ENCODE measurements at regions of chr1 and their contacts with region 1.

Region 1: GRCh38 chr1:245045087-245045881 is 109.5 kb upstream of the KIF26B start:
- DNase-seq: no peak
- H3K4me3 ChIP-seq: no peak overlapping the region
- H3K27ac ChIP-seq: no peak overlapping the region
- H3K4me1 ChIP-seq: peaks cover 0 to 9% of the 10 kb centered on the region in 2 experiments; a peak in 1 of 4 replicates
- H3K27me3 ChIP-seq: no peaks in the 10 kb centered on the region
- CTCF ChIP-seq: no peak
- EP300 ChIP-seq: no peak
- RAD21 ChIP-seq: no peak

Region 2: GRCh38 chr1:244603498-244603897 is 441.8 kb before region 1 on chr1:
- CTCF ChIA-PET with region 1: interaction called, 29 read pairs
- POLR2A ChIA-PET with region 1: no interaction called
- DNase-seq: peak; percentile 43
- H3K4me3 ChIP-seq: no peak overlapping the region
- H3K27ac ChIP-seq: no peak overlapping the region
- H3K4me1 ChIP-seq: peaks cover 0 to 4% of the 10 kb centered on the region in 2 experiments; a peak in 1 of 4 replicates
- H3K27me3 ChIP-seq: no peaks in the 10 kb centered on the region
- CTCF ChIP-seq: peak; percentile 88
- EP300 ChIP-seq: no peak
- RAD21 ChIP-seq: peak; percentile 88

Region 3: DNA sequence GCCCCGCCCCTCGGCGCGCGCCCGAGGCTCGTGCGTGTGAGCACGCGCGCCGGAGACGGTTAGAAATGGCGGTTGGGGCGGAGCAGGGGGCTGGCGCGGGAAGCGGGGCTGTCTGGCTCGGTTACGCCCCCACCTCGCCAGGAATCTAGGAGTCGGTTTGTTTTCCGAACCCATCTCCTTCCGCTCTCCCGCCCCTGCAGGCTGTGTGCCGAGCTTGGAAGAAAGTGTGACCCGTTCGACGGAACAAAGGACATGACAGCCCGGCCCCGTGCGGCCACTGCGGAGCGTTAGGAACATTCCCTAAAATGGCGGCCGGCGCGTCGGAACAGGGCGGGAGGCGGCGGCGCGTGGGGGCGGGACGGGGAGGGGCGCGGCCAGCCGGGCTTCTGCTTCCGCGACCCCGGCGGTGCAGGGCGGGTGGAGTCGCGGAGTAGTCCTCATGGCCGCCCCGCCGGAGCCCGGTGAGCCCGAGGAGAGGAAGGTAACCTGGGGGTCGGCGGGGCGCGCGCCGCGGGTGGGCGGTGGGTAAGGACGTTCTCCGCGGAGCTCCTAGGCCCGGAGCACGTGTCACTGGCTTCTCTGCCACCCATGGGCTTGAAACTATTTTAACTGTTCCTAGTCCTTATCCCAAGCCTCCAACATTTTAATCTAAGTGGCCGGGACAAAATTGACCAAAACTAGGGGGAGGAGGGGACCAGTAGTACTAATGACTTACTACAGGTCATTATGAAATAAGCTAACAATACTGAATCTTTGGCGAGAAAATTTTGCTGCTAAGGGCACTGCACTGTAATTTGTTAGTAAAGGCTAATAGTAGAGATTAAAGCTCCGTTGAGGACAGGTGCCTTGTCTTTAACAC is 209.8 kb before region 1 on chr1 and contains the start of gene COX20:
- CTCF ChIA-PET with region 1: interaction called, 14 read pairs
- POLR2A ChIA-PET with region 1: interaction called, 19 read pairs
- DNase-seq: peak; percentile 88
- H3K4me3 ChIP-seq: peak within 1 kb of the TSS; percentile 71 to 83
- H3K27ac ChIP-seq: peak within 1 kb of the TSS; percentile 97 to 99
- H3K4me1 ChIP-seq: peaks cover 13 to 15% of the 10 kb centered on the region in 2 experiments; a peak in 3 of 4 replicates
- H3K27me3 ChIP-seq: no peaks in the 10 kb centered on the region
- CTCF ChIP-seq: no peak
- EP300 ChIP-seq: peak; percentile 20 to 38; a peak in 1 of 4 replicates
- RAD21 ChIP-seq: no peak
- polyA plus RNA-seq, gene COX20: 24.8 and 29.0 TPM in 2 replicates

Region 4: GRCh38 chr1:244854166-244854565 is 191.1 kb before region 1 on chr1:
- CTCF ChIA-PET with region 1: interaction called, 25 read pairs
- POLR2A ChIA-PET with region 1: no interaction called
- DNase-seq: no peak
- H3K4me3 ChIP-seq: no peak overlapping the region
- H3K27ac ChIP-seq: no peak overlapping the region; a peak in 2 of 4 replicates
- H3K4me1 ChIP-seq: peaks cover 0 to 3% of the 10 kb centered on the region in 2 experiments; a peak in 1 of 4 replicates
- H3K27me3 ChIP-seq: no peaks in the 10 kb centered on the region
- CTCF ChIP-seq: no peak
- EP300 ChIP-seq: no peak
- RAD21 ChIP-seq: no peak

Region 5: DNA sequence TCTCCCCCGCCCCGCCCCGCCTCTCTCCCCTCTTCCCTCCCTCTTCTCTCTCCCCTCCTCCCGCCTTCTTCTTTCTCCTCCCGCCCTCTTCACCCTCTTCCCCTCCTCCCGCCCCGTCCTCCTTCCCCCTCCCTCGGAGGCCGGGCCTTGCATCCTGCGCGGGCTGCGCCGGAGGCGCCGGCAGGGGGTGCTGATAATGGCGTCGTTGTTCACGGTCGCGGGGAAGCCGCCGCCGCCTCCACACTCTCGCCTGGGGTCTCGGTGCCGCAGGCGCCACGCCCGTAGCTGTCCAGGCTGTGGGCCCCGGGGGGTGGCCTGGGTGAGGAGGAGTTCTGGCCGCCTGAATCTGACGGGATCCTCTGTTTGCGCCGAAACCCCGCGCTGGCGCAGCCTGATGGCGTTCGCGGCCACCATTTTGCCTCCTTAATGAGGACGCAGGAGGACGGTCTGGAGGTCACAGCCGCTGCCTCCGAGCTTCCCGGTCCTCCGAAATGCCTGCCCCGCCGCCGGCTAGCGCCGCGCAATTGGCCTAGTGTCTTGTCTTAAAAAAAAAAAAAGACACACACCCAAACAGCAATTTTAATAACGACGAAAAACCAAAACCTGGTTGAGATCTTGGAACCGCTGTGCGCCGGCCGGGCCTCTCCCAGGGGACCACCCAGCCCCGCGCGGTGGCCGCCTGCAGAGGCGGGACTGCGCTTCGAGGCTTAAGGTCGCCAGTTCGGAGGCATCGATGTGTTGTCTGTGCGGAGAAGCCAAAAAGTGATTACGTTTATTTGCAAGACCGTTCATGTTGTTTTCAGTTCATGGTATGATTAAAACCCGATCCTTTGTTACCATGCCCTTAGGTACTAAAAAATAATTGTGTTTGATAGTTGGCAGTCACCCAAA is 74.4 kb before region 1 on chr1:
- CTCF ChIA-PET with region 1: interaction called, 26 read pairs
- POLR2A ChIA-PET with region 1: interaction called, 9 read pairs
- DNase-seq: peak; percentile 90
- H3K4me3 ChIP-seq: peak overlapping the region; percentile 74 to 76
- H3K27ac ChIP-seq: peak overlapping the region; percentile 99 to 100
- H3K4me1 ChIP-seq: peaks cover 13 to 14% of the 10 kb centered on the region in 2 experiments; a peak in 3 of 4 replicates
- H3K27me3 ChIP-seq: no peaks in the 10 kb centered on the region
- CTCF ChIP-seq: peak; percentile 68
- EP300 ChIP-seq: peak in 1 of 2 experiments; percentile 6; a peak in 1 of 4 replicates
- RAD21 ChIP-seq: no peak; the same call in 1 of the 2 replicates

Region 6: DNA sequence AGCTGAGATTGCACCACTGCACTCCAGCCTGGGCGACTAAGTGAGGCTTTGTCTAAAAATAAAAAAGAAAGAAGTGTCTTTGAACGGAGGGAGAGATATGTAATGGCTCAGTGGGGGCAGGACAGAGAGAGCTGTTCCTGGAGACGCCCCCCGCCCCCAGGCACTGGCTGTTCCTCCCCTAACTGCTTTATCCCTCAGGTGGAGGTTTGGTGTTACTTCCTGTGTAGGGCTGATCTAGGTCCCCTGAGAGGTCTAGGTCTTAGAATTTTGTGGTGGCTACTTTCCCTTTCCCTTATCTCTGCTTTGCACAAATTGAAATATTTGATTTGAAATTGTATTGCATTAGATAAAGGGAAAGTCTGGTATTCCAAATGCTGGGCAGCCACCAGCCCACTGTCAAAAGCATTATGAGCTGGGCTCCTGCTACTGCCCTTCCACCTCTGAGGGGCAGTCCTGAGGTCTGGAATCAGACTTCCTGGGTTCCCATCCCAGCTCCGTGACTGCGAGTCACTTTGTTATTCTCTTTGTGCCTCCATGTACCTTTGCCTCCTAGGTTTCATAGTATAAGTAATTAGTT is 25.3 kb before region 1 on chr1:
- CTCF ChIA-PET with region 1: interaction called, 20 read pairs
- POLR2A ChIA-PET with region 1: no interaction called
- DNase-seq: peak; percentile 42
- H3K4me3 ChIP-seq: no peak overlapping the region
- H3K27ac ChIP-seq: no peak overlapping the region
- H3K4me1 ChIP-seq: peaks cover 0 to 10% of the 10 kb centered on the region in 2 experiments; a peak in 1 of 4 replicates
- H3K27me3 ChIP-seq: no peaks in the 10 kb centered on the region
- CTCF ChIP-seq: no peak
- EP300 ChIP-seq: peak in 1 of 2 experiments; percentile 18; a peak in 1 of 4 replicates
- RAD21 ChIP-seq: peak; percentile 36

Region 7: DNA sequence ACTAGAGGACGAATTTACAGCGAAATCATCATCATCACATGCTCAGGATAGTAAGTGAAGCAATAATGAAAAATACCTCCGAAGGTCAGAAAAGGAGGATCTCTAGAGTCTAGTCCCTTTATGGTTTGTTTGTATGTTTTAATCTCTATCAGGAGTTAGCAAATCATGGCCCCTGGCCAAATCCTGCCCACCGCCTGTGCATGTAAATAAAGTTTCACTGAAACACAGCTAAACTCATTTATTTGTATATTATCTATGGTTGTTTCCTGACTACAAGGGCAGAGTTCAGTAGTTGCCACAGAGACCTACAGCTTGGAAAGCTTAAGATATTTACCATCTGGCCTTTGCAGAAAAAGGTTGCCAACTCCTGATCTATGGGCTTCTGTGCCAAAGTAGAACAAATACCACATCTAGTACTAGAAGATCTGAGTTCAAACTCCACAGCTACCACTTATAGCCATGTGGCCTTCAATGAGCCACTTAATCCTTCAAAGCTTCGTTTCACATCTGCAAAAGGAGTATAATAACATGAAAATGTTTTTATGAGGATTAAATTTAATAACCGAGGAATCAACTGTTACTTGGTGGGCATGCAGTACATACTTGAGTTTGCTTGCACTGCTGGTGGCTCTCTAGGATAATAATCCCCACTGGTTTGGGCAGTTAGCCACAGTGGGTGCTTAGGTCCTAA is 15.5 kb after region 1 on chr1:
- CTCF ChIA-PET with region 1: interaction called, 18 read pairs
- POLR2A ChIA-PET with region 1: no interaction called
- DNase-seq: peak; percentile 21
- H3K4me3 ChIP-seq: no peak overlapping the region
- H3K27ac ChIP-seq: peak overlapping the region in 1 of 2 experiments; percentile 19; a peak in 1 of 4 replicates
- H3K4me1 ChIP-seq: peaks cover 0 to 8% of the 10 kb centered on the region in 2 experiments; a peak in 1 of 4 replicates
- H3K27me3 ChIP-seq: no peaks in the 10 kb centered on the region
- CTCF ChIP-seq: no peak
- EP300 ChIP-seq: no peak
- RAD21 ChIP-seq: no peak